ENCODE measurements at regions of chr1 and their contacts with region 1.

Region 1: GRCh38 chr1:240808381-240808780 is 196.4 kb upstream of the GREM2 start:
- DNase-seq: no peak
- H3K4me3 Mint-ChIP-seq: no peak overlapping the region
- H3K27ac Mint-ChIP-seq: no peak overlapping the region
- H3K4me1 Mint-ChIP-seq: peaks cover 4% of the 10 kb centered on the region
- H3K27me3 Mint-ChIP-seq: no peaks in the 10 kb centered on the region
- CTCF ChIP-seq: no peak

Region 2: DNA sequence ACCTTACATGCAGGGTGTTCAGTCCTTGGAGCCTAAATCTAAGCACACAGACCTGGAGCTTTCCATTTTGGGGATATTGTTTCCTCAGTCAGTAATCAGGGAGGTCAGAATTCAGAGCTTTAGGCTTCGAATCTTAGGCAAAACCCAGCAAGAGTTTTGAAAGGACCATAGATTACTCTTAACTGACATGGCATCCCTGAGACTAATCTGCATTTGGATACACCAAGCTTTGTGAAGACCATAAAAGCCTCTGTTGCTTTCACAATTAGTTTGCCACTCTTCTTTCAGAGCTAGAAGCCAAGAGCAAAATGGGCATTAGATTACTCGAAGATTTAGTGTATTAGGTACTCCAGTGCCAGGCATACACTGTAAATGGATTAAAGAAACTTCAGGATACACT is 64.7 kb before region 1 on chr1:
- CTCF ChIA-PET with region 1: no interaction called
- intact Hi-C with region 1: no loop called
- DNase-seq: no peak
- H3K4me3 Mint-ChIP-seq: no peak overlapping the region
- H3K27ac Mint-ChIP-seq: no peak overlapping the region
- H3K4me1 Mint-ChIP-seq: no peaks in the 10 kb centered on the region
- H3K27me3 Mint-ChIP-seq: no peaks in the 10 kb centered on the region
- CTCF ChIP-seq: no peak

Region 3: GRCh38 chr1:240786880-240787279 is 21.5 kb before region 1 on chr1:
- CTCF ChIA-PET with region 1: no interaction called
- intact Hi-C with region 1: loop called (anchors 2 kb)
- DNase-seq: no peak
- H3K4me3 Mint-ChIP-seq: no peak overlapping the region
- H3K27ac Mint-ChIP-seq: no peak overlapping the region
- H3K4me1 Mint-ChIP-seq: peaks cover 29% of the 10 kb centered on the region
- H3K27me3 Mint-ChIP-seq: no peaks in the 10 kb centered on the region
- CTCF ChIP-seq: no peak

Region 4: GRCh38 chr1:240869071-240869470 is 60.7 kb after region 1 on chr1:
- CTCF ChIA-PET with region 1: no interaction called
- intact Hi-C with region 1: no loop called
- DNase-seq: no peak
- H3K4me3 Mint-ChIP-seq: no peak overlapping the region
- H3K27ac Mint-ChIP-seq: no peak overlapping the region
- H3K4me1 Mint-ChIP-seq: peaks cover 9% of the 10 kb centered on the region
- H3K27me3 Mint-ChIP-seq: no peaks in the 10 kb centered on the region
- CTCF ChIP-seq: no peak

Measured in Calu3 (cell line).